ENCODE measurements at regions of chr2 and their contacts with region 1.

Region 1: GRCh38 chr2:64214281-64215115 is 70.3 kb upstream of the PELI1 start:
- DNase-seq: peak in 7 of 9 donors; percentile 60 to 82 (median 73)
- ATAC-seq: peak; percentile 73
- H3K4me3 ChIP-seq: peak overlapping the region; percentile 11
- H3K4me3 Mint-ChIP-seq: peak overlapping the region; percentile 35 to 89 (median 71)
- H3K27ac ChIP-seq: peak overlapping the region; percentile 68
- H3K27ac Mint-ChIP-seq: peak overlapping the region; percentile 78 to 96 (median 93)
- H3K4me1 ChIP-seq: peaks cover 20 to 37% of the 10 kb centered on the region in 2 donors
- H3K4me1 Mint-ChIP-seq: peaks cover 24 to 69% (median 55%) of the 10 kb centered on the region in 7 donors
- H3K27me3 ChIP-seq: no peaks in the 10 kb centered on the region
- H3K27me3 Mint-ChIP-seq: no peaks in the 10 kb centered on the region

Region 2: GRCh38 chr2:64036034-64036705 is 178.3 kb before region 1 on chr2:
- CTCF ChIA-PET with region 1: no interaction called
- POLR2A ChIA-PET with region 1: no interaction called
- intact Hi-C with region 1: loop called in 1 of 2 experiments (anchors 2 kb)
- DNase-seq: peak in 7 of 9 donors; percentile 60 to 75 (median 64)
- ATAC-seq: peak; percentile 98
- H3K4me3 ChIP-seq: peak overlapping the region; percentile 25
- H3K4me3 Mint-ChIP-seq: peak overlapping the region; percentile 30 to 86 (median 60)
- H3K27ac ChIP-seq: peak overlapping the region; percentile 54
- H3K27ac Mint-ChIP-seq: peak overlapping the region; percentile 49 to 93 (median 83)
- H3K4me1 ChIP-seq: peaks cover 20 to 42% of the 10 kb centered on the region in 2 donors
- H3K4me1 Mint-ChIP-seq: peaks cover 29 to 70% (median 54%) of the 10 kb centered on the region in 7 donors
- H3K27me3 ChIP-seq: no peaks in the 10 kb centered on the region
- H3K27me3 Mint-ChIP-seq: no peaks in the 10 kb centered on the region

Region 3: GRCh38 chr2:64114063-64114911 is 100.2 kb before region 1 on chr2:
- CTCF ChIA-PET with region 1: no interaction called
- POLR2A ChIA-PET with region 1: no interaction called
- intact Hi-C with region 1: loop called in 1 of 2 experiments (anchors 2 kb)
- DNase-seq: peak in 5 of 9 donors; percentile 7 to 45 (median 34)
- ATAC-seq: peak; percentile 81
- H3K4me3 ChIP-seq: no peak overlapping the region
- H3K4me3 Mint-ChIP-seq: peak overlapping the region; percentile 12 to 75 (median 66)
- H3K27ac ChIP-seq: no peak overlapping the region
- H3K27ac Mint-ChIP-seq: peak overlapping the region; percentile 12 to 75 (median 60)
- H3K4me1 ChIP-seq: peaks cover 10 to 32% of the 10 kb centered on the region in 2 donors
- H3K4me1 Mint-ChIP-seq: peaks cover 55 to 94% (median 85%) of the 10 kb centered on the region in 7 donors
- H3K27me3 ChIP-seq: no peaks in the 10 kb centered on the region
- H3K27me3 Mint-ChIP-seq: no peaks in the 10 kb centered on the region

Region 4: DNA sequence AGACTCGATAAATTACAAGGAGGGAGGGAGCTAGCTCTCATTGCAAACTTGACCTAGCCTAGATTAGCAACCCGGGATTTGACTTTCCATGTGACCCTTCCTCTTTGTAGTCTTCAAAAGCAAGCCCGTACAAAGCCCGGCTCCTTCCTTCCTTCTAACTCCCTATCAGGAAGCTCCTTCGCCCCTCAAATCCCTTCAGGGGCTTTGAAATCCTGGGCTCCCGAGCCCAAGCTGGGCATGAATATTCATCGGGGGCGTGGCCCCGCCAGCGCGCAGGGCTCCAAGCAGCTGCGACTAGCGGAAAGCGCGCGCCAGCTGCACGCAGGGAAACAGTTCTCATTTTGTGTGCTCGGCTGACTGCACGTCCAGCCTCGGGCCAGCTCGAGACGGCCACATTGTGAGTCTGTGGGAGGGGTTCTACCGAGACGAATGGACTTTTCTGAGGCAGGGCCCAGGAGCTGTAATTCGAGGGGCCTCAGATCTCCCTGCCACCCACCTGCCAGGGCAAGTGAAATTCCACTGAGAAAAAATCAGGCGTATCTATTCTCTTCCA is 13.7 kb after region 1 on chr2:
- CTCF ChIA-PET with region 1: interaction called, 6 read pairs
- POLR2A ChIA-PET with region 1: interaction called, 17 read pairs
- intact Hi-C with region 1: loop called (anchors 1 kb)
- DNase-seq: peak in 8 of 9 donors; percentile 38 to 61 (median 57)
- ATAC-seq: peak; percentile 94
- H3K4me3 ChIP-seq: peak overlapping the region; percentile 48
- H3K4me3 Mint-ChIP-seq: peak overlapping the region; percentile 86 to 100 (median 95)
- H3K27ac ChIP-seq: peak overlapping the region; percentile 78
- H3K27ac Mint-ChIP-seq: peak overlapping the region; percentile 83 to 99 (median 95)
- H3K4me1 ChIP-seq: peaks cover 0 to 15% of the 10 kb centered on the region in 2 donors
- H3K4me1 Mint-ChIP-seq: peaks cover 16 to 45% (median 38%) of the 10 kb centered on the region in 7 donors
- H3K27me3 ChIP-seq: no peaks in the 10 kb centered on the region
- H3K27me3 Mint-ChIP-seq: no peaks in the 10 kb centered on the region

Region 5: GRCh38 chr2:64354857-64355680 is 140.6 kb after region 1 on chr2:
- CTCF ChIA-PET with region 1: no interaction called
- POLR2A ChIA-PET with region 1: no interaction called
- intact Hi-C with region 1: no loop called
- DNase-seq: no peak
- ATAC-seq: peak; percentile 12
- H3K4me3 ChIP-seq: no peak overlapping the region
- H3K4me3 Mint-ChIP-seq: no peak overlapping the region
- H3K27ac ChIP-seq: no peak overlapping the region
- H3K27ac Mint-ChIP-seq: no peak overlapping the region
- H3K4me1 ChIP-seq: no peaks in the 10 kb centered on the region
- H3K4me1 Mint-ChIP-seq: peaks cover 0 to 7% (median 0%) of the 10 kb centered on the region in 7 donors
- H3K27me3 ChIP-seq: no peaks in the 10 kb centered on the region
- H3K27me3 Mint-ChIP-seq: peaks cover 10 to 44% (median 19%) of the 10 kb centered on the region in 5 donors

Region 6: GRCh38 chr2:64410671-64411070 is 196.2 kb after region 1 on chr2:
- CTCF ChIA-PET with region 1: no interaction called
- POLR2A ChIA-PET with region 1: no interaction called
- intact Hi-C with region 1: no loop called
- DNase-seq: no peak
- ATAC-seq: no peak
- H3K4me3 ChIP-seq: no peak overlapping the region
- H3K4me3 Mint-ChIP-seq: no peak overlapping the region
- H3K27ac ChIP-seq: no peak overlapping the region
- H3K27ac Mint-ChIP-seq: no peak overlapping the region
- H3K4me1 ChIP-seq: no peaks in the 10 kb centered on the region
- H3K4me1 Mint-ChIP-seq: peaks cover 0 to 2% (median 0%) of the 10 kb centered on the region in 7 donors
- H3K27me3 ChIP-seq: no peaks in the 10 kb centered on the region
- H3K27me3 Mint-ChIP-seq: peaks cover 0 to 30% (median 0%) of the 10 kb centered on the region in 5 donors

Measured in naive thymus-derived CD4-positive, alpha-beta T cell (primary cell).